Motor neuron (in vitro differentiated cells): ENCODE measurements at regions of chr14 and their contacts with region 1.

Region 1: GRCh38 chr14:52801015-52801712 is 9.8 kb upstream of the GNPNAT1 start:
- ATAC-seq: peak in 3 of 8 experiments; percentile 60 to 83 (median 61)
- H3K4me3 ChIP-seq: no peak overlapping the region
- H3K27ac ChIP-seq: no peak overlapping the region
- H3K4me1 ChIP-seq: no peaks in the 10 kb centered on the region

Region 2: GRCh38 chr14:52422650-52423356 is 378.4 kb before region 1 on chr14:
- in situ Hi-C with region 1: no loop called
- ATAC-seq: no peak
- H3K4me3 ChIP-seq: no peak overlapping the region
- H3K27ac ChIP-seq: no peak overlapping the region
- H3K4me1 ChIP-seq: no peaks in the 10 kb centered on the region

Region 3: DNA sequence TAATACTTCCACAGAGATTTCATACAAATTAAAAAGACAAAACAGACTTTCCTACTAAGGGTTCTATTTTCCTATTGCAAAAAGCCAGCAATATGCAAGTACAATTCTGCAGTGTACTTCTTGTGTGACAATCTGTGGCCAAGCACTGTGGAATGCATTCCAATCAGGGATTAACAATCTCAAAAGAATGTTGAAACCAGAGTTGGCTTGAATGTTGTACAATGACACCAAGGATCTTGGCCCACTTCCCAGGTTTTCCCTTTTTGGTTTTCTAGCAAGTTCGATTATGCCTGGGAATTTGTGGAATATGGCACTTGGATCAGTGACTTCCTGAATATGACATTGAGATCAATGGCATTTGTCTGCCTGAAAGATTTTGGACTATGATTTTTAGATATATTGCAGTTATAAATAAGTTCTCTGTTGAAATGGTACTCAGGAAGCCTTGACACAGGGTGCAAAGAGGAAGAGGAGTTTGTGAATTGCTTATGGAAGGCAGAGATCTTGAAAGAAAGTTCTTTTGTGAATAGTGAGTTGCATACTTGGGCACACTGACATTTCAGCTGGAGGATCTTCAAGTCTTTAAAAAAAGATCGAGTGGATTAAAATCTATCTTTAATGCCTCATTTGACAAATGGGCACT is 231.1 kb after region 1 on chr14:
- in situ Hi-C with region 1: loop called in 1 of 9 experiments (anchors 25 kb)
- ATAC-seq: peak in 6 of 8 experiments; percentile 16 to 91 (median 69)
- H3K4me3 ChIP-seq: no peak overlapping the region
- H3K27ac ChIP-seq: no peak overlapping the region
- H3K4me1 ChIP-seq: no peaks in the 10 kb centered on the region

Region 4: DNA sequence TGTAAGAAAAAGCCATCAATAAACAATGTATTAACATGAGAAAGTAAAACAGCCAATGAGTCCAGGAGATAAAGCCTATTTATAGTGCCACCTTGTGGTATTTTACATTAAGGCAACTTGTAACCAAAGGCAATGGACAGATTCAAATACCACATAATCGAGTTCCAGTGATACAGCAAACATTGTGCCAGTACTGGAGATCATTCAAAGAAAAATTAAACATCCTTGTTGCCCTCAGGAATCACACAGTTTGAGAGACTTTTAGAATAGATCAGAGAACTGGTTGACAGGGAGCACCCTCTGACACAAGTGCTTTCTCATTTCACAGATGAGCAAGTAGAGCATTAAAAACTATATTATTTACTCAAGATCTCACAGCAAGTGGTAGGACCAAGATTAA is 253.8 kb after region 1 on chr14:
- in situ Hi-C with region 1: loop called in 1 of 9 experiments (anchors 25 kb)
- ATAC-seq: peak; percentile 44 to 88 (median 65)
- H3K4me3 ChIP-seq: no peak overlapping the region
- H3K27ac ChIP-seq: no peak overlapping the region
- H3K4me1 ChIP-seq: no peaks in the 10 kb centered on the region